ENCODE measurements at regions of chr16 and their contacts with region 1.

Region 1: DNA sequence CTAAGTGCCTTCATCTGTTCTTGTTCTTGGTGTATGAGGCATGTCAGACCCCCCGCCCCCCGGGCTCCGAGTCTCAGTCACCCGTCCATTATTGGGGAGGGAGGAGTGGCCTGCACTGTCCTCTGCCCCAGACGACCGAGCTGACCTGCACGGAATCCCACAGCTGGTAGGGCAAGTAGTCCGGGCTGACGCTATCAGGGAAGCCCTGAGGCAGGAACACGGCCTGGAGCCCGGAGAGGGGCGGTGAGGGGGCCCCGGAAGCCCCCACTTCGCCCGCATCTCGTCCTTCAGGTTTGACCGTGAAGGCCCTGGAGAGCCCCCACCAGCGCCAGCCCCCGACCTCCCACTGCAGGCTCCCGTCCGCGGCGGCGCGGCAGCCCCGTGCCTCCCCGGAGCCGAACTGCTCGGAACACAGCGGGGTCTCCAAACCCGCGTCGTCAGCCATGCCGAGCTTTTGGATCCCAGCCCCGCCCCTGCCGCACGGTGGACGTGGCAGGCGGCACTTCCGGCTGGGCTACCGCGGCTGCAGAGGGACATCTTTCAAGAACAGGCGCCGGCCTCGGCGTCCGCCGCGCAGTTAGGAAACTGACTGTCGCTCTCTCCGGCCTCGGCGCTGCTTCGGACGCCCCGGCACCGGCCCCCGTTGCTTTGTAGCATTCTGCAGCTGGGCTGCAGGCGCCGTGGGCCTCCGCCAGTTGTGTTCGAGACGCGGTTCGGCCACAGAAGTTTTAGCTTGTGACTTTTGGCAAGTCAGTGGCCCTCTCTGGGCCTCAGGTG is at the start of gene RUSF1:
- DNase-seq: peak; percentile 84
- H3K4me3 Mint-ChIP-seq: peak within 1 kb of the TSS; percentile 88
- H3K27ac Mint-ChIP-seq: peak within 1 kb of the TSS; percentile 98
- H3K4me1 Mint-ChIP-seq: peaks cover 22% of the 10 kb centered on the region
- H3K27me3 Mint-ChIP-seq: no peaks in the 10 kb centered on the region
- CTCF ChIP-seq: no peak
- total RNA-seq, gene RUSF1: 72.0 and 88.8 TPM in 2 replicates

Region 2: DNA sequence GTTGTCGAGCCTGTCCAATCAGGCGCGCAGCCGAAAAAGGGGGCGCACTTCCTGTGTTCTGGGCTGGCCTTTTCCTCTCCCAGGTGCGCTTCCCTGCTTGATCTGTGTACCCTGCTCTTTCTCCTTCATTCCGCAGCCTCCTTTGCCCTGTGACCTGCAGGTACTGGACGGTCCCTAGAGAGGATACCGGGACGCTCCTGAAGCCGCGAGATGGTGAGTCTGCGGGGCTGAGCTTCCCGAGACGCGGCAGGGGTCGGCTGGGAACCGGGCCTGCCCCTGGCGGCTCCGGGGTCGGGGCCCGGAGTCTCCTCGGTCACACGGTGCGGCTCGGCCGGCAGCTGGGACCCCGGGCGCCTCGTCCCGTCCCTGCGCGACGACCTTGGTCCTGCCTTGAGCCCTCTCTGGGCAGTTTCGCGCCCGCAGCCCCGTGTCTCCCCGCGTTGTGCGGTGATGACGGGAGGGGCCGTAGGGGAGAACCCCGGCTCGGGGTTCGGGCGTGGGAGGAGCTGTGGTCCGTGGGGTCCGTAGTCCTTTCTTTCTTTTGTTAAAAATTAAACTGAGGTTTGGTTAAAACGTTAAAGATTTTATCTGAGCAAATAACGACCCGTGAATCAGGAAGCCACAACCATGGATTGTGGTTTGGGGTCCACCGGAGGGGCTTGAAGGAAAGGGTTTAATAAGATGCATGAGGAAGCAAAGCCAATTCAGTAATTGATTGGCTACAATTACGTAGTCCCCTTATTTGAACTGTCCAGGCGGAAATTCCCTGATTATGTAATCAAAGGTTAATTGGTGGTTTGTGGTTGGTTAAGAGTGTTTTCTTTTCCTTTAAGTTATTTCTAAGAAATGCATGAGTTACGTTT is 192.6 kb after region 1 on chr16:
- CTCF ChIA-PET with region 1: interaction called, 10 read pairs
- POLR2A ChIA-PET with region 1: interaction called, 8 read pairs
- intact Hi-C with region 1: no loop called
- DNase-seq: peak; percentile 89
- H3K4me3 Mint-ChIP-seq: peak overlapping the region; percentile 87
- H3K27ac Mint-ChIP-seq: peak overlapping the region; percentile 90
- H3K4me1 Mint-ChIP-seq: peaks cover 11% of the 10 kb centered on the region
- H3K27me3 Mint-ChIP-seq: no peaks in the 10 kb centered on the region
- CTCF ChIP-seq: no peak